ENCODE measurements at regions of chr10 and their contacts with region 1.

Region 1: GRCh38 chr10:86508217-86508616 is 13.4 kb downstream of the WAPL start:
- DNase-seq: no peak
- H3K4me3 ChIP-seq: no peak overlapping the region
- H3K27me3 ChIP-seq: no peaks in the 10 kb centered on the region
- CTCF ChIP-seq: no peak

Region 2: GRCh38 chr10:86489071-86489810 is 19.0 kb before region 1 on chr10:
- CTCF ChIA-PET with region 1: no interaction called
- POLR2A ChIA-PET with region 1: interaction called, 11 read pairs
- DNase-seq: no peak
- H3K4me3 ChIP-seq: no peak overlapping the region
- H3K27me3 ChIP-seq: no peaks in the 10 kb centered on the region
- CTCF ChIP-seq: no peak